PC-3 (cell line): ENCODE measurements at regions of chr6 and their contacts with region 1.

Region 1: DNA sequence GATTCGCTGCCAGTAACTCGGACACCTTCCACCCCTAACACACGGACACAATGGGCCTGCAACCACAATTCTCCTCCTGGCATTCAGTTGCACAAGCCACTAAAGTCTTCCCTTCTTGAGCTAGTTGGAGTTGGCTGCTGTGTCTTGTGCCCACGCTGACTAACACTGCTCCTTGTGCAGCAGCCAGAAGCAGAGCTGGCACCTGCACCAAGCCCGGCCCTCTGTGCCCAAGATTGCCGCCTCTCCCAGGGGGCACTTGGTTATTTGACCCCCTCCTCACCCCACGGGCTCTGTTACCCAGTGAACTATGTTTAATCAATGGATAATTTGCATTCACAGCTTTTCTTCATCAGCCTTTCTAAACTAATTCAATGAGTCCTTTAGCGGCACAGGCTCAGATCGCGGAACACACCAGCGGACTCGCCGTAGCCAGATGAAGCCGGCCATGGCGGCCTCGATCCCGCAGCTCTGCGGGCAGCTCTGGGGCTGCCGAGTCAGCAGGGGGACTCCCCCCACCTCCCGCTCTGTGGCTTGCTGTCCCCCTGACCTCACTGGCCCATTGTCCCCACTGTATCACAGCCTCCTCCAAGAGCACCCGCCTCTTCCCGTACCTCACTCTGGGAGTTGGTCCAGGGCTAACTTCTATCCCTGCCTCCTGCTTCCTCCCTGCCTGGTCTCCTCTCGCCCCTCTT is 94.8 kb upstream of the AFDN start:
- DNase-seq: no peak
- ATAC-seq: no peak
- H3K4me3 ChIP-seq: no peak overlapping the region
- H3K27ac ChIP-seq: no peak overlapping the region
- H3K4me1 ChIP-seq: no peaks in the 10 kb centered on the region
- H3K27me3 ChIP-seq: peaks cover 39% of the 10 kb centered on the region
- CTCF ChIP-seq: no peak

Region 2: GRCh38 chr6:167565884-167566599 is 165.8 kb before region 1 on chr6:
- CTCF ChIA-PET with region 1: no interaction called
- POLR2A ChIA-PET with region 1: no interaction called
- intact Hi-C with region 1: no loop called
- DNase-seq: no peak
- ATAC-seq: no peak
- H3K4me3 ChIP-seq: no peak overlapping the region
- H3K27ac ChIP-seq: no peak overlapping the region
- H3K4me1 ChIP-seq: no peaks in the 10 kb centered on the region
- H3K27me3 ChIP-seq: no peaks in the 10 kb centered on the region
- CTCF ChIP-seq: no peak

Region 3: GRCh38 chr6:168132531-168133167 is 400.8 kb after region 1 on chr6:
- CTCF ChIA-PET with region 1: interaction called, 10 read pairs
- POLR2A ChIA-PET with region 1: no interaction called
- intact Hi-C with region 1: no loop called
- DNase-seq: peak; percentile 47
- ATAC-seq: peak; percentile 73
- H3K4me3 ChIP-seq: no peak overlapping the region; the same call in 1 of the 2 replicates
- H3K27ac ChIP-seq: no peak overlapping the region
- H3K4me1 ChIP-seq: no peaks in the 10 kb centered on the region
- H3K27me3 ChIP-seq: peaks cover 9% of the 10 kb centered on the region
- CTCF ChIP-seq: peak; percentile 48

Region 4: DNA sequence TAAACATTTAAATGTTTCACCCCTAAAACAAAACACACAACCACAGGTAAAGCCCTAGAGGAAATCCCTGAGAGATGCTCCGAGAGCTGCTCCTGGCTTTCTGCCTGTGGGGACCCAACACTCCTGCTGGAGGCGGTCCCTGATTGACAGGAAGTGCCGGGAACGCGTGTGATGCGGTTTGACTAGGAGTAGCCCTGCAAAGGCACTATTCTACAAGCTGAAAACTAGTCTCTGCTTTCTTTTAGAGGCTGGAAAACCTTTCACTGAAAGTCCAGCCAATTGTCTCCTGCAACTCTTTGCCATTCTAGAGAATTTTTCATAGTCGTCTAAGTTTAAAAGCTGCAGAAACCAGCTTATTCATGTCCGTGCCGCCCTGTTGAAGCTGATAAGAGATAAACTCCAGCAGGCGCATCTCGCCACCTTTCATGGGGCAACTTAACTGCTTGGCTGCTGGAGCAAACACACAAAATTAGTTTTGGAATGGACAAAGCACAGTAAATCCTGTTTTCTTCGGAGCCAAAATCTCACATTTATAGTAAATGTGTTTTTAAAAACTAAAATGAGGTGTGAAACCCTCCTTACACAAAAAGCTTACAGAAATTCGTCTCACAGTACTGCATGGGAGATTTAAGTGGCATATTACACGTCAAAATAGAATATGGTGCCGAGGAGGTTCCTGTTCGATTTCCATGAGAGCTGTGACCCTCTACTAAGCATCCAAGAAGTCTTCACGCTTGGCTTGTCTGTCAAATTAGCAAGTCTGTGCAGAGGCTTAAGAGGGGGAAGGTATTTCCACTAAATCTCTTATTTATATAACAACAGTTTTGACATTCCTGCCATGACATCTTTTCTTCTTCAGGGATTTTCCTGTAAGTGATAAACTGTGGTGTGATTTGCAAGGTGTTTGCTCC is 540.8 kb after region 1 on chr6:
- CTCF ChIA-PET with region 1: no interaction called
- POLR2A ChIA-PET with region 1: no interaction called
- intact Hi-C with region 1: no loop called
- DNase-seq: no peak
- ATAC-seq: no peak
- H3K4me3 ChIP-seq: no peak overlapping the region
- H3K27ac ChIP-seq: no peak overlapping the region
- H3K4me1 ChIP-seq: no peaks in the 10 kb centered on the region
- H3K27me3 ChIP-seq: peaks cover 6% of the 10 kb centered on the region; the same call in 1 of the 2 replicates
- CTCF ChIP-seq: no peak